Activated T-helper 2 cell treated with anti-CD3 and anti-CD28 coated beads, Interferon-gamma antibody, Interleukin-2, Interleukin-4, amounts not matched to agents 10 μg/mL and 5 μg/mL and 100 μg/mL, durations not matched to agents 14 hours and 24 hours and 36 hours (primary cell): ENCODE measurements at regions of chr13 and their contacts with region 1.

Region 1: GRCh38 chr13:28204690-28205443 is 66.5 kb downstream of the PAN3 start:
- DNase-seq: no peak
- H3K4me3 Mint-ChIP-seq: no peak overlapping the region
- H3K27ac Mint-ChIP-seq: peak overlapping the region; percentile 39
- H3K4me1 Mint-ChIP-seq: peaks cover 18% of the 10 kb centered on the region
- H3K27me3 Mint-ChIP-seq: no peaks in the 10 kb centered on the region

Region 2: GRCh38 chr13:28031220-28031895 is 173.5 kb before region 1 on chr13:
- intact Hi-C with region 1: no loop called
- DNase-seq: no peak
- H3K4me3 Mint-ChIP-seq: no peak overlapping the region
- H3K27ac Mint-ChIP-seq: no peak overlapping the region
- H3K4me1 Mint-ChIP-seq: peaks cover 2% of the 10 kb centered on the region
- H3K27me3 Mint-ChIP-seq: peaks cover 15% of the 10 kb centered on the region

Region 3: GRCh38 chr13:28268800-28269223 is 63.9 kb after region 1 on chr13:
- intact Hi-C with region 1: loop called (anchors 1 kb)
- DNase-seq: no peak
- H3K4me3 Mint-ChIP-seq: no peak overlapping the region
- H3K27ac Mint-ChIP-seq: no peak overlapping the region
- H3K4me1 Mint-ChIP-seq: peaks cover 23% of the 10 kb centered on the region
- H3K27me3 Mint-ChIP-seq: no peaks in the 10 kb centered on the region